ENCODE measurements at regions of chr1 and their contacts with region 1.

Region 1: DNA sequence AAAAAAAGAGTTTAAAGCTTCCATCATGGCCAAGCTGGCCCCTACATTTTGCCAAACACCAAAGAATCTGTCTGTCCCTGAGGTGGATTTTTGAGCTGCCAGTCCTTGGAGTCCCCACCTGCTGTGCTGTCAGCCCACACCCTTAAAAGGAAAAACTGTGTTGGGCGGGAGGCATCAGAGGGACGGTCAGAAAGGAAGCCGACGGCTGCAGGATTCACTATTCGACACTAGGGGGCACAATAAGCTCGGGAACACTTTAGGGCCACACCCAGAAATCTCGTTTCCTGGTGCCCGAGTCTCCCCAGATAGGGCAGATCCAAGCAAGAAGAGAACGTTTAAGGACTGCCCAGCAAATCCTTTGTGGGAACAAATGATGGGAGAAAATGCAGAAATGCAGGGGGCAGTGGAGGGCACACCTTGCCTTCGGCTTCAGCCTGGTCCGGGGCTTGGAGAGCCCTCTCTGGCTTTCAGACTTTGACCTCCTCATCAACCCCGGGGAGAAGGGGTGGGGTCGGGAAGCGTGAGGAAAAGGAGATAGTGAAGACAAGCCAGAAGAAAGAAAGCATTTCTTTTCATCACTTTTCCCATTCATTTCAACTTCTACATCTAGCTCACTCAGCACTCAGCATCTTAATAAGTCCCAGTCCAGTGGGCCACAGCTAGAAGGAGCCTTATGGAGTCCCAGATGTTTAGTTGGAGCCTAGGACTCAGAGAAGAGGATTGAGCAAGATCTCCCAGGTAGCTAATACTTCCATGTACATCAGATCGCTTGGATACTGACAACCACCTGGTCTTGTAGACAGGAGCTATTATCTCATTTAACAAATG is 5.0 kb upstream of the CTTNBP2NL start:
- DNase-seq: peak; percentile 66
- ATAC-seq: peak; percentile 88
- H3K4me3 Mint-ChIP-seq: peak overlapping the region; percentile 66
- H3K27ac Mint-ChIP-seq: peak overlapping the region; percentile 46
- H3K4me1 Mint-ChIP-seq: peaks cover 31% of the 10 kb centered on the region
- H3K27me3 Mint-ChIP-seq: peaks cover 14% of the 10 kb centered on the region
- CTCF ChIP-seq: peak; percentile 89

Region 2: GRCh38 chr1:112501810-112502641 is 111.0 kb after region 1 on chr1:
- CTCF ChIA-PET with region 1: interaction called, 43 read pairs
- POLR2A ChIA-PET with region 1: interaction called, 4 read pairs
- intact Hi-C with region 1: loop called (anchors 2 kb)
- DNase-seq: peak; percentile 51
- ATAC-seq: peak; percentile 69
- H3K4me3 Mint-ChIP-seq: peak overlapping the region; percentile 70
- H3K27ac Mint-ChIP-seq: no peak overlapping the region
- H3K4me1 Mint-ChIP-seq: peaks cover 34% of the 10 kb centered on the region
- H3K27me3 Mint-ChIP-seq: peaks cover 51% of the 10 kb centered on the region
- CTCF ChIP-seq: no peak

Region 3: GRCh38 chr1:112674439-112674985 is 283.5 kb after region 1 on chr1 and contains the start of gene MOV10:
- CTCF ChIA-PET with region 1: interaction called, 29 read pairs
- POLR2A ChIA-PET with region 1: interaction called, 6 read pairs
- intact Hi-C with region 1: no loop called
- DNase-seq: peak; percentile 45
- ATAC-seq: peak; percentile 69
- H3K4me3 Mint-ChIP-seq: peak within 1 kb of the TSS; percentile 97
- H3K27ac Mint-ChIP-seq: peak within 1 kb of the TSS; percentile 88
- H3K4me1 Mint-ChIP-seq: peaks cover 35% of the 10 kb centered on the region
- H3K27me3 Mint-ChIP-seq: no peaks in the 10 kb centered on the region
- CTCF ChIP-seq: no peak
- total RNA-seq, gene MOV10: 33.3 and 36.4 TPM in 2 replicates

Region 4: DNA sequence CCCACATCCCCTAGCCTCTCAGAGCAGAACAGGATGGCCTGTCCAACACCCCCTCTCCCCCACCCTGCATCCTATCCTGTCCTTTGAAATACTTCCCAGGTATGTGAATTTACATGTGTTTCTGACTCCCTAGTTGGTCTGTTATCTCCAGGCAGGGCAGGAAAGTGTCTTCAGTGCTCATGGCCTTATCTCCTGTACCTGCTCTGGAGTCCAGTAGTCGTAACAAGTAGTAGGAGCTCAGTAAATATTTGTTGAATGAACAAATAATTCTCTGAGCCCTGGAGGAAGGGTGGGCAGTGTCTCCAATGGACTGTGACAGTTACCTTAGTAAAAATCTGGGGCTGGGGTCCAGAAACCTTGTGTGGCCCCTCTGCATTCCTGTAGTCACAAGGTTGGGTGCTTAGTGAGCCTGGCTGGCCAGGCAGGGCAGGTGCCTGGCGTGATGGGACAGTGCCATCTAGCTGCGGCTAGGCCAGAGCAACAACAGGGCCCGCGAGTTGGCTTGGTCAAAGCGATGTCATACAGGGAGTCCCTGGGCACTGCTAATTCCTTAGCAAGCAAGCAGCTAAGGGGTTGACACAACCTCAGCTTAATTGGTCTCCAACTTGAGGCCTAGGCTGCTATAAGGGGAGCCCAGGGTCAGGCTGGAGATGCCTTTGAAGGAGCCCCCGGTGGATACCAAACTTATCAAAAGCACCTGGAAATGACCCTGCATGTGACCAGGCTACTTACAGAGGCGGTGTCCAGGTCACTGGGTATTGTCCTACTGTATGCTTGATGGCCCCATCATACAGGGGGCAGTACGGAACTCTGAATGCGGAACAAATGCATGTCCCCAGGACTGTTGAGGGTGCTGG is 413.1 kb after region 1 on chr1:
- CTCF ChIA-PET with region 1: interaction called, 7 read pairs
- POLR2A ChIA-PET with region 1: no interaction called
- intact Hi-C with region 1: loop called (anchors 1 kb)
- DNase-seq: peak; percentile 27
- ATAC-seq: peak; percentile 82
- H3K4me3 Mint-ChIP-seq: no peak overlapping the region
- H3K27ac Mint-ChIP-seq: no peak overlapping the region
- H3K4me1 Mint-ChIP-seq: no peaks in the 10 kb centered on the region
- H3K27me3 Mint-ChIP-seq: peaks cover 3% of the 10 kb centered on the region
- CTCF ChIP-seq: no peak

Region 5: GRCh38 chr1:112882271-112882744 is 491.3 kb after region 1 on chr1:
- CTCF ChIA-PET with region 1: interaction called, 3 read pairs
- POLR2A ChIA-PET with region 1: no interaction called
- intact Hi-C with region 1: loop called (anchors 2 kb)
- DNase-seq: no peak
- ATAC-seq: no peak
- H3K4me3 Mint-ChIP-seq: no peak overlapping the region
- H3K27ac Mint-ChIP-seq: no peak overlapping the region
- H3K4me1 Mint-ChIP-seq: no peaks in the 10 kb centered on the region
- H3K27me3 Mint-ChIP-seq: peaks cover 7% of the 10 kb centered on the region
- CTCF ChIP-seq: no peak

Region 6: DNA sequence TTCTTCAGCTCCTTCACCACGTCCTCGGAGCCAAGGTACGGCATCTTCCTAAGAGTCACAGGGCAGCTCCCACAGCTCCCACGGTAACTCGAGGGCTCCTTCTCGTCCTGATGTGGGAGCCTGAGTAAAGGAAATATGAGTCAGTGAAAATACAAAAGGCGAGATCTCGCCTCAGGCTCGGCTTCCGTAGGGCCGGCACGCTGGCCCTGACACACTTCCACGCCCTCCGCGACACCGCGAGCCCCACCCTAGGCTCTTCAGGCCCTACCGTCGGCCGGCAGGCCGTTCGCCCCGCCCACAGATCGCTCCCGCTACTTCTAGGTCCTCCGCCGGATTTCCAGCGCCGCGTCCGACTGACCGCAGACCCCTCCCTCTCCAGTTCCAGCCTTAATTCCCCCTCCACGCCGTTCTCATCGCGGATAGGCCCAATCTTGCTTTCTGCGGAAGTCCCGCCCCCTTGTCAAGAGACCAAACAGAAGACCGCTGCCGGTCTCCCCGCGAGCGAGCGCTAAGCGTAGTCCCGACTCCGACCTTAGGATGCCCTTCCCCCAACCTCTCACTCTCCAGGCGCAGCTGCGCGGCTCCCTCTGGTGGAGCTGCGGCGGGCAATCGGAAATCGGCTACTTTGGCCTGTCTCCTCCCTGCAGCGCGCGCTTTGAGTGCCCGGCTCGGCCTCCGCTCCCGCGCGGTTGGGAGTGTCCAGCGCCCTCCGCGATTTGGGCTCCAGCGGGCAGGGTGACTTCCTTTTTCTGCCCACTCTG is 1513.9 kb after region 1 on chr1 and contains the starts of genes AP4B1 and DCLRE1B:
- CTCF ChIA-PET with region 1: no interaction called
- POLR2A ChIA-PET with region 1: no interaction called
- intact Hi-C with region 1: loop called (anchors 10 kb)
- DNase-seq: peak; percentile 89
- ATAC-seq: peak; percentile 91
- H3K4me3 Mint-ChIP-seq: peak within 1 kb of the TSS; percentile 94
- H3K27ac Mint-ChIP-seq: peak within 1 kb of the TSS; percentile 95
- H3K4me1 Mint-ChIP-seq: peaks cover 51% of the 10 kb centered on the region
- H3K27me3 Mint-ChIP-seq: no peaks in the 10 kb centered on the region
- CTCF ChIP-seq: no peak
- total RNA-seq, gene AP4B1: 48.5 and 69.9 TPM in 2 replicates
- total RNA-seq, gene DCLRE1B: 5.4 and 6.0 TPM in 2 replicates

Measured in activated B cell treated with CpG ODN at 0.5 μM for 24 hours (primary cell).